A549 (cell line): ENCODE measurements at regions of chr12 and their contacts with region 1.

Region 1: DNA sequence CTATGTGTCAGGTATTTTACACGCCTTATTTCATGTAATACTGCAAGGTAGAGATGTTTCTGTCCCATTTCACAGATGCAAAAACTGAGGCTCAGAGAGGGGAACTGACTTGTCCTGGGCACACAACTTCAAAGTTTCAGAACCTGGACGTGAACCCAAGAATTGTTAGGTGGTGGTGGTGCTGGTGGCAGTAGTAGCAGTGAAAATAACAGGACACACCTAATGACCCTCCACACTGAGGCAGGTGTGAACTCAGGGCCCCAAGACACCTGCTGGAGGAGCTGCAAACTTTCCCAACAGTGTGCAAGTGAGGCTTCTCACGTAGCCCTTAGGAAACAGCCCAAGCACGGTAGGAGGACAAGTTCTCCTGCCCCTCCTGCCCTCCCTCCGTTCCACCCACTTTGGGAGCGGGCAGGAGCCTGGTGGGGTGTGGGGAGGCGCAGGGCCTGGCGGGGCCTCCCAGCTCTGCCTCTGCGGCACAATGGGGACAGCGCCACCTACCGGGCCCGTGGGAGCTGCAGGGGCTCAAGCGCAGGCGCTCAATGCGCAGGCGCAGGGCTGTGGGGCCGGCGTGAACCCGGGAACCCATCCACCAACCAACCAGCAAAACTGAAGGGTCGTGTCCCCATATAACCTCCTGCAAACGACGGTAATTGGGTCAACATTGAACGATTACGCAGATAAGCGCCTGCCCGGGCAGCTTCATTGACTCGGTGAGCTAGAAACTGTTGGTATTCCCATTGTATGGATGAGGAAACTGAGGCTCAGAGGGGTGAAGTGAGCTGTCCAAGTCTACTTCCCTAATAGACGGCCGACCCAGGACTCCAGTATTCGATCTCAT is 12.0 kb upstream of the TRPV4 start:
- DNase-seq: peak; percentile 88 to 90
- ATAC-seq: peak; percentile 91 to 95
- H3K4me3 ChIP-seq: peak overlapping the region; percentile 35; the same call in 2 of the 3 replicates
- H3K27ac ChIP-seq: peak overlapping the region; percentile 58 to 76
- H3K4me1 ChIP-seq: peaks cover 10% of the 10 kb centered on the region
- CTCF ChIP-seq: peak; percentile 99
- EP300 ChIP-seq: no peak
- POLR2A ChIP-seq: no peak
- RAD21 ChIP-seq: peak; percentile 93 to 96

Region 2: DNA sequence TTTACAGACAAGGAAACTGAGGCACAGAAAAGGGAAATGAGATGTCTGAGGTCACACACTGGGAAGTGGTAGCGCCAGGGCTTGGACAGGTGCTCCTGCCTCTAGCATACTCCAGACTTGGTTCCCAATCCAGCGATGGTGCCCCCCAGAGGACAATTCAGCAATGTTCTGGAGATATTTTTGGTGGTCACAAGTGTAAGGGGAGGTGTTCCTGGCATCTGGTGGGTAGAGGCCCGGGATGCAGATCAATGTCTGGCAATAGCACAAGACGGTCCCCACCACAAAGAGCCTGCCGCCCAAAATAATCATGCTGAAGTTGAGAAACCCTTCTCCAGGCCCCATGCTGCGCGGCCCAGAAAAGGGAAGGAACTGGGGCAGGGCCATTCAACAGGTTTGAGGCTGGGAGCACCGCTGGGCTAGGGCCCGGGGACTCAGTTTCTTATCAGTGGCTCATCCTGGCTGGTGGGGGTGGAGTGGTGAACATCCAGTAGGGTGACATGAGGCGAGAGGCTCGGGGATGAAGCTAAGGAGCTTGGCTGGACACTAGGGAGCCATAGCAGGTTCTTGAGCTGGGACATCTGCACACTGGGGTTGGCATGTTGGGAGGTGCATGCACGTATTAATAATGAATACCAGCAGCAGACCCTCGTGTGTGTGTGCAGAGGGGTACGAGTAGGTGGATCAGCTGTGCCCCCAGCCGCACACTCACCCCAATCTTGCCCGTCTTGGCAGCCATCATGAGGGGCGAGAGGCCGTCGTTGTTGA is 47.1 kb before region 1 on chr12:
- CTCF ChIA-PET with region 1: interaction called, 277 read pairs
- POLR2A ChIA-PET with region 1: no interaction called
- DNase-seq: peak in 1 of 2 experiments; percentile 46
- ATAC-seq: peak in 1 of 2 experiments; percentile 78; a peak in 3 of 6 replicates
- H3K4me3 ChIP-seq: no peak overlapping the region
- H3K27ac ChIP-seq: no peak overlapping the region
- H3K4me1 ChIP-seq: peaks cover 9% of the 10 kb centered on the region; the same call in 2 of the 3 replicates
- CTCF ChIP-seq: peak; percentile 30; the same call in 2 of the 3 replicates
- EP300 ChIP-seq: no peak
- POLR2A ChIP-seq: no peak
- RAD21 ChIP-seq: peak in 1 of 2 experiments; percentile 12; a peak in 1 of 5 replicates

Region 3: DNA sequence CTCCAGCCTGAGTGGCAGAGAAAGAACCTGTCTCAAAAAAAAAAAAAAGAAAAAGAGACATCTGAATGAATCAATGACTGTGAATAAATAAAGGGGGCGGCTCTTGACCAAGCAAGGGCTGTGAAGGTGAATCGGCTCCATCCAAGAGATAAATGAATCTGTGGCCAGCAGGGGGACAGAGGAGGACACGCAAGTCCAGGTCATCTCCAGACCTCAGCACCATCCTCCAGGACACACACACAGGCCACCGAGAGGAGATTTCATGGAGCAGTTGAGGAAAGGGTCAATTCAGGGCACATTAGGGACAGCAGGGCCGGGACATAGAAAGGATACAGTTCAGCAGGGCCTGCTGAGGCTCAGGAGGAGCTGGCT is 33.6 kb before region 1 on chr12:
- CTCF ChIA-PET with region 1: interaction called, 277 read pairs
- POLR2A ChIA-PET with region 1: no interaction called
- DNase-seq: peak in 1 of 2 experiments; percentile 67
- ATAC-seq: peak; percentile 66 to 84; a peak in 4 of 6 replicates
- H3K4me3 ChIP-seq: no peak overlapping the region
- H3K27ac ChIP-seq: no peak overlapping the region
- H3K4me1 ChIP-seq: peaks cover 3% of the 10 kb centered on the region; the same call in 1 of the 3 replicates
- CTCF ChIP-seq: no peak
- EP300 ChIP-seq: no peak
- POLR2A ChIP-seq: no peak
- RAD21 ChIP-seq: no peak

Region 4: DNA sequence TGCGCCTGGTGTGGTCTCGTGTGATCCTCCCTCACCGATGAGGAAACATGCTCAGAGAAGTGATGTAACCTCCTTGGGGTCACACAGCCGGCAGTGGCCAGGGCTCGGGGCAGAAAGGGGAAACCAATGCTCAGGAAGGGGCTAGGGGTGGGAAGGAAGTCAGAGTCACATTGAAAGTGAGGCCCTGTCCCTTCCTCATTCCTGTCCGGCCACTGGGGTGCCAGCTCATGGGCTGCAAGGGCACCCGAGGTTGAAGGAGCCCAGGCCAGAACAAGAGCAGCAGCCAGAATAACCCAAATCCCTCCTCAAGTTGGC is 17.0 kb before region 1 on chr12:
- CTCF ChIA-PET with region 1: interaction called, 86 read pairs
- POLR2A ChIA-PET with region 1: no interaction called
- DNase-seq: no peak
- ATAC-seq: no peak
- H3K4me3 ChIP-seq: no peak overlapping the region
- H3K27ac ChIP-seq: 0 out of 6 replicates have a peak overlapping the region, but pooled peaks of 1 of the 2 experiments have one; percentile 28
- H3K4me1 ChIP-seq: peaks cover 17% of the 10 kb centered on the region
- CTCF ChIP-seq: no peak
- EP300 ChIP-seq: no peak
- POLR2A ChIP-seq: no peak
- RAD21 ChIP-seq: no peak

Region 5: DNA sequence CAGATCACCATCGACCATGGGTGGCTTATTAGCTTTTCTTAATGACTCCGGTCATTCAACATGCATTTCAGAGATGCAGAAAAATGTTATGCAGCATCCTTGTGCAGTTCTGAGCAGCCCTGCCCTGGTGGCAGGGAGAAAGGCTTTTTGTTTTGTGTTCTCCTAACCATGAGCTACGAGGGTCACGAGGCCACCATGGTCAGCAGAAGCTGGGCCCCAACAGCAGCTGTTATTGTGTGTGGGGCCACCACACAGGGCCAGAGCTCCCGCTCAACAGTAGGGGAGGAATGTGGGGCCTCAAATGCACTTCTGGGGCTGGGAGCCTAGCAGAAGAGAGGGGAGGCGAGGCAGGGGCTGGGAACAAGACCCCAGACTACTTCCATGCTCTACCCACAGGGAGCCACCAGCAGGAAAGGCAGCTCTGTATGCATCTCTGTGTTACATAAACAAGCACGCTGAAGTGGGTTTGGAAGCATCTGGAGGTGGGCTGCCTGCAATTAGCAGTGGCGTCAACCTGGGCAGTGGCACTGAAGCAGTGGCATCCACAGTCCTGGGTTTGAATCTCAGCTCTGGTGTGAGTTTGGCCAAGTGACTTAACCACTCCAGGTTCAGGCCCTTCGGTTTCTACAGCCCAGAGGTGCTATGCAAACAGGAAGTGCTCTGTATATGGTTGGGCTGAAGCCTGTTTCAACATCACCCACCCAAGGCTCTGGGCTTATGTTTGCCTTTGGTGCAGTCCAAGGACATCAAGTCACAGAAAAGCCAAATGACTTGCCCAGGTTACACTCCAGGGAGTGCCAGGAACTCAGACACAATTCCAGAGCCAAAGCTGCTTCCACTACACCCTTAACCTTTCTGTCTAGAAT is 18.9 kb after region 1 on chr12:
- CTCF ChIA-PET with region 1: interaction called, 100 read pairs
- POLR2A ChIA-PET with region 1: no interaction called
- DNase-seq: peak in 1 of 2 experiments; percentile 66
- ATAC-seq: peak; percentile 62 to 80; a peak in 4 of 6 replicates
- H3K4me3 ChIP-seq: no peak overlapping the region
- H3K27ac ChIP-seq: peak overlapping the region; percentile 23 to 69; a peak in 4 of 6 replicates
- H3K4me1 ChIP-seq: peaks cover 19% of the 10 kb centered on the region
- CTCF ChIP-seq: no peak
- EP300 ChIP-seq: no peak
- POLR2A ChIP-seq: no peak
- RAD21 ChIP-seq: no peak

Region 6: DNA sequence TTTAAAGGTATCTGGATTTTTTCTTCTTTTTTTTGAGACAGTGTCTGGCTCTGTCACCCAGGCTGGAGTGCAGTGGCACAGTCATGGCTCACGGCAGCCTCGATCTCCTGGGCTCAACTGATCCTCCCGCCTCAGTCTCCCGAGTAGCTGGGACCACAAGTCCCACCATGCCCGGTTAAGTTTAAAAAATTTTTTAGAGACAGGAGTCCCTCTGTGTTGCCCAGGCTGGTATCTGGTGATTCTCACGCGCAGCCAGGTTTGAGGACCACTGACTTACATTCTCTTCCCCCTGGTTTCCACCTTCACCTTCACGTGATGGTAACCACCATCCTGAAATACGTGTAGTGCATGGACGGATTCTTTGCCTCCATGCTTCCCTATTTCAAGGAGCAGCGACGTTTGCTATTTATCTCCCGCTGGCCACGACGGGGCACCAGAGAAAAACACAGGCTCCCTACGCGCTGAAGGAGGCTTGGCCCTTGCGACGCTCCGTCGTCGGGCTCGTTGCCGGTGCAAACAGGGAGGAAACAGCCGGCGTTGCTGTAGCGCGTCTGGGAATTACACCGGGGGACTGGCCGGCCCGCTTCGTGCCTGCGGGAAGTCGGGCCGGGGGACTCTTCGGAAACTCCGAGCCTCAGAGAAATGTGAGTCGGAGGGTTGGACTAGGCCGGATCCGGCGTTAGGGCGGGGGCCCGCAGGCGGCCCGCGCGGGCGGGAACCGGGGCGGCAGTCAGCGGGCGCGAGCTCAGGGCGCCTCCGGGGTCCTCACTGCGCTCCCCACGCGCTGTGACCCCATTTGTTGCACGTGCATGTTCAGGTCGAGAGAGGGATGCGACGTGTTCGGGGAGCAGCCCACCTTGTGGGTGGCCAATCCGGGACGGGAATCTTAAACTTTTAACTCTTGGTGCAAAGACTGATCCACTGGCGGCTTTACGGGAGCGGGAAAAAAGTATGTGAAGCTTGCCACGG is 54.9 kb after region 1 on chr12 and contains the start of gene TCHP:
- CTCF ChIA-PET with region 1: interaction called, 12 read pairs
- POLR2A ChIA-PET with region 1: no interaction called
- DNase-seq: peak; percentile 90 to 92
- ATAC-seq: peak; percentile 91
- H3K4me3 ChIP-seq: peak within 1 kb of the TSS; percentile 69
- H3K27ac ChIP-seq: peak within 1 kb of the TSS; percentile 93 to 95
- H3K4me1 ChIP-seq: peaks cover 5% of the 10 kb centered on the region; the same call in 1 of the 3 replicates
- CTCF ChIP-seq: peak; percentile 38; the same call in 2 of the 3 replicates
- EP300 ChIP-seq: no peak
- POLR2A ChIP-seq: peak; percentile 55
- RAD21 ChIP-seq: peak; percentile 35 to 43; a peak in 3 of 5 replicates
- polyA plus RNA-seq, gene TCHP: 14.9 and 18.4 TPM in 2 replicates

Region 7: GRCh38 chr12:110355073-110355472 is 509.9 kb after region 1 on chr12:
- CTCF ChIA-PET with region 1: no interaction called
- POLR2A ChIA-PET with region 1: no interaction called
- DNase-seq: peak; percentile 68 to 74
- ATAC-seq: peak; percentile 63 to 73
- H3K4me3 ChIP-seq: no peak overlapping the region
- H3K27ac ChIP-seq: no peak overlapping the region
- H3K4me1 ChIP-seq: no peaks in the 10 kb centered on the region
- CTCF ChIP-seq: peak; percentile 34
- EP300 ChIP-seq: no peak
- POLR2A ChIP-seq: no peak
- RAD21 ChIP-seq: peak in 1 of 2 experiments; percentile 43; a peak in 2 of 5 replicates